ENCODE measurements at regions of chr11 and their contacts with region 1.

Region 1: DNA sequence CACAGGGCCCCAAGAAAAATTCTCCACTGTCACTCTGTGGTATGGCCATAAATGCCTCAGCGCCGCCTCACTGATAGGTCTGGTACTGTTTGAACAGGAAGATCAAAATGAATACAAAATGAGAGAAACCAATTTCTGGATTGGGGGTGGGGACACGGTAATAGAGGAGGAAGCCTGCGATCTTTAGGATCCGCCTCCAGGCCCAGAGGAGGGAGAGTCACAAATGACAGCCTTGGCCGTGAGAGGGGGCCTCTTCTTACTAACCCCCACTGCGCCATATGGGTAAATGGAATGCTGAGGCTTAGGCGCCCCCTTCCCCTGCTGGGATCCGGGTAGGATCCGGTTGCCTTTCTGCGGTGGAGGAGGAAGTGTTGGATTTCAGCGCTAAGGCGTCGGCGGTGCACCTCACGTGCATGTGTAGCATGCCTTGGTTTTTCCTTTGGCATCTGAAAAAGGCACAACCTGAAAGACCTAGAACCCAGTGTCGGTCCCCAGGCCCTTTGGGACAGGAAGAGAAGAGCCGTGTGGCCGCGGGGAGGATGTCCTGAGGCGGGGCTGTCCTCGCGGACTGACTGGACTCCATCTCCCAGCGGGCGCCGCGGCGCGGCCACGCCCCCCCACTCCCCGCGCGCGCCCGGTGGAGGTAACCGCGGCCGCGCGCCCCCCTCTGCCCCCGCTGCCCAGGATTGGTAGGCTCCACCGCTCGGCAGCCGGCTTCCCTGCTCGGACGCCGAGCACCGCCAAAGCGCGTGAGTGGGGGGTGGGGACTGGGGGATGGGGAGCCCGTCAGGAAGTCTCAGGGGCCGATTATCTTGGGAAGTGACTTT is 718 bp upstream of the MADD start:
- DNase-seq: peak; percentile 92
- ATAC-seq: peak; percentile 67
- H3K4me3 ChIP-seq: peak overlapping the region; percentile 58 to 89 (median 84)
- H3K4me3 Mint-ChIP-seq: peak overlapping the region; percentile 89
- H3K27ac ChIP-seq: peak overlapping the region; percentile 90 to 92
- H3K27ac Mint-ChIP-seq: peak overlapping the region; percentile 94
- H3K4me1 ChIP-seq: peaks cover 47 to 48% of the 10 kb centered on the region in 2 donors
- H3K4me1 Mint-ChIP-seq: peaks cover 55% of the 10 kb centered on the region
- H3K27me3 ChIP-seq: no peaks in the 10 kb centered on the region
- H3K27me3 Mint-ChIP-seq: no peaks in the 10 kb centered on the region
- CTCF ChIP-seq: no peak

Region 2: DNA sequence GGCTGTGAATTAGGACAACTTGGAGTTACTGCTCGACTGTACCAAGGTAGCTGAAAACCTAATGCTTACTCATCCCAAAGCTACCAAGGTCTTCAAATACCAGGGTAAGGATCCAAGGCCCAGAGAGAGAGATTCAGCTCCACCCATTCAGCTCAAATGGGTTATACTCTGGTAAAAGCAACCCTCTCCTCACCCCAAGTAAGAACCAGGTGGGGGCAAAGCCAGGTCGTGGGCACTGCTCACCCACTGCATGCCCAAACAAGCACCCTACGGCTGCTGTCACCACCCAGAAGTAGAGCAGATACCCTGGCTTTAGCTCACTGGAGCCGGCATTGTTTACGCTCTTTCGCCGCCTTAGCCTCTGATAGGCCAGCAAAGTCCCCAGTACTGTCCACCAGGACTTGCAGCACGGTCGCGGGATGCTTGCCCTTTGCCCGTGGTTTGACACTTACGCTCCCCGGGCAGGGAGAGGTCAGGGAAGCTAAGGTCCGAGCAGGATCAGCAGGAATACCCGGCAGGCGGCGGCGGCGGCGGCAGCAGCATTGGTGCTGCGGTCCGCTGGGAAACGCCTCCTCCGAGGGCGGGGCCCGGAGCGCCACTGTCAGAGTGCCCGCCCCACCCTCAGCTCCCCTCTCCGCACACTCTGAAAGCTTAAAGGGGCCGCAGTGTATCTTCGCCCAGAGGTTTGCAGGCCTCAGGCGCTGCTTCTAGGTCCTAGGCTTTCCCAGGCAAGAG is 442.7 kb before region 1 on chr11:
- CTCF ChIA-PET with region 1: no interaction called
- POLR2A ChIA-PET with region 1: interaction called, 14 read pairs
- intact Hi-C with region 1: no loop called
- DNase-seq: peak; percentile 75
- ATAC-seq: peak; percentile 100
- H3K4me3 ChIP-seq: peak overlapping the region; percentile 55 to 85 (median 61)
- H3K4me3 Mint-ChIP-seq: peak overlapping the region; percentile 88
- H3K27ac ChIP-seq: peak overlapping the region in 1 of 2 donors; percentile 31
- H3K27ac Mint-ChIP-seq: peak overlapping the region; percentile 46
- H3K4me1 ChIP-seq: peaks cover 11 to 13% of the 10 kb centered on the region in 2 donors
- H3K4me1 Mint-ChIP-seq: peaks cover 22% of the 10 kb centered on the region
- H3K27me3 ChIP-seq: no peaks in the 10 kb centered on the region
- H3K27me3 Mint-ChIP-seq: no peaks in the 10 kb centered on the region
- CTCF ChIP-seq: no peak

Region 3: GRCh38 chr11:47213985-47214564 is 55.1 kb before region 1 on chr11:
- CTCF ChIA-PET with region 1: interaction called, 3 read pairs
- POLR2A ChIA-PET with region 1: interaction called, 4 read pairs
- intact Hi-C with region 1: loop called (anchors 1 kb)
- DNase-seq: peak; percentile 88
- ATAC-seq: peak; percentile 79
- H3K4me3 ChIP-seq: peak overlapping the region; percentile 71 to 92 (median 76)
- H3K4me3 Mint-ChIP-seq: peak overlapping the region; percentile 98
- H3K27ac ChIP-seq: peak overlapping the region; percentile 89
- H3K27ac Mint-ChIP-seq: peak overlapping the region; percentile 98
- H3K4me1 ChIP-seq: peaks cover 14 to 31% of the 10 kb centered on the region in 2 donors
- H3K4me1 Mint-ChIP-seq: peaks cover 30% of the 10 kb centered on the region
- H3K27me3 ChIP-seq: no peaks in the 10 kb centered on the region
- H3K27me3 Mint-ChIP-seq: no peaks in the 10 kb centered on the region
- CTCF ChIP-seq: no peak

Region 4: DNA sequence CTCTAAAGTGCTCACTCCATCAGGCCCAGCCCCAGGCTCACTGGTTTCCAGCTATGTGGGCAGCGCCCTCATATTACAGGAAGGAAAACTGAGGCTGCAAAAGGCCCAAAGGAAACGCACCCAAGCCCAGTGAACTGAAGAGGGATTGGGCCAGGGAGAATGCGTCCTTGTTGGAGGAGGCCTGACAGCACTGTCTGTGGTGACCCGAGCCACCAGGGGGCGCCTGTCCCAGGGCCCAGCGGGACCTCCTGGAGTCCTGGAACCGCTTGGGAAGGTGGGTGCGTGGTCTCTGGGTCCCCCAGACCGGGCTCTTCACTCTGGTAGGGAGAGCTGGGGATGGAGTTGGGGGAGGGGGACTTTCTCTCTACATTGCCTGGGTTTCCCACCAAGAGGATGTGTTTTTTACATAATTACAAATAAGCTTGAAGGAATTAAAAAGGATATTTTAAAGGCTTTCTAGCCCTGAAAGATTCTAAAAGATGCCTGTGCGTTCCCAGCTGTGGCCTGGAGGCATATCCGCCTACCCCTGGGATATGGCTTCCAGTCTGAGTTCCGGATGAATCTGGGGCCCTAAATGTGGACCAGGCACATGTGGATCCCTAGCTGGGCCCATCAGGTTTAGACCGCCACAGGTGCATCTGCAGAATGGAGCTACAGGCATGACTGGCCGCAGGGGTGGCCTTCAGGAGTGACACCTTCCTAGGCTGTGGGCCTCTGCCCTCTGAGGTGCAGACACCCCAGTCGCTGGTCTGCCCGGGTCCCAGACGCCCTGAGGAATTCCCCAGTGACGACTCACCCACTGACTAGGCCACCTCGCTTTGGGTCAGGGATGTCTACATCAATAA is 104.9 kb after region 1 on chr11:
- CTCF ChIA-PET with region 1: no interaction called
- POLR2A ChIA-PET with region 1: interaction called, 4 read pairs
- intact Hi-C with region 1: loop called (anchors 2 kb)
- DNase-seq: peak; percentile 83
- ATAC-seq: peak; percentile 35
- H3K4me3 ChIP-seq: no peak overlapping the region
- H3K4me3 Mint-ChIP-seq: peak overlapping the region; percentile 41
- H3K27ac ChIP-seq: peak overlapping the region in 1 of 2 donors; percentile 68
- H3K27ac Mint-ChIP-seq: peak overlapping the region; percentile 65
- H3K4me1 ChIP-seq: peaks cover 40 to 46% of the 10 kb centered on the region in 2 donors
- H3K4me1 Mint-ChIP-seq: peaks cover 51% of the 10 kb centered on the region
- H3K27me3 ChIP-seq: no peaks in the 10 kb centered on the region
- H3K27me3 Mint-ChIP-seq: no peaks in the 10 kb centered on the region
- CTCF ChIP-seq: peak; percentile 91